PC-3 (cell line): ENCODE measurements at regions of chr17 and their contacts with region 1.

Region 1: GRCh38 chr17:50949989-50950881 is 84.1 kb upstream of the TOB1 start:
- DNase-seq: peak; percentile 96
- ATAC-seq: peak; percentile 82
- H3K4me3 ChIP-seq: peak overlapping the region; percentile 28; the same call in 1 of the 2 replicates
- H3K27ac ChIP-seq: peak overlapping the region; percentile 78
- H3K4me1 ChIP-seq: peaks cover 38% of the 10 kb centered on the region
- H3K27me3 ChIP-seq: no peaks in the 10 kb centered on the region
- CTCF ChIP-seq: peak; percentile 99

Region 2: GRCh38 chr17:50783193-50783660 is 167.0 kb before region 1 on chr17:
- CTCF ChIA-PET with region 1: interaction called, 14 read pairs
- POLR2A ChIA-PET with region 1: no interaction called
- intact Hi-C with region 1: loop called (anchors 1 kb)
- DNase-seq: peak; percentile 97
- ATAC-seq: peak; percentile 99
- H3K4me3 ChIP-seq: peak overlapping the region; percentile 27; the same call in 1 of the 2 replicates
- H3K27ac ChIP-seq: no peak overlapping the region
- H3K4me1 ChIP-seq: no peaks in the 10 kb centered on the region
- H3K27me3 ChIP-seq: no peaks in the 10 kb centered on the region
- CTCF ChIP-seq: peak; percentile 99

Region 3: DNA sequence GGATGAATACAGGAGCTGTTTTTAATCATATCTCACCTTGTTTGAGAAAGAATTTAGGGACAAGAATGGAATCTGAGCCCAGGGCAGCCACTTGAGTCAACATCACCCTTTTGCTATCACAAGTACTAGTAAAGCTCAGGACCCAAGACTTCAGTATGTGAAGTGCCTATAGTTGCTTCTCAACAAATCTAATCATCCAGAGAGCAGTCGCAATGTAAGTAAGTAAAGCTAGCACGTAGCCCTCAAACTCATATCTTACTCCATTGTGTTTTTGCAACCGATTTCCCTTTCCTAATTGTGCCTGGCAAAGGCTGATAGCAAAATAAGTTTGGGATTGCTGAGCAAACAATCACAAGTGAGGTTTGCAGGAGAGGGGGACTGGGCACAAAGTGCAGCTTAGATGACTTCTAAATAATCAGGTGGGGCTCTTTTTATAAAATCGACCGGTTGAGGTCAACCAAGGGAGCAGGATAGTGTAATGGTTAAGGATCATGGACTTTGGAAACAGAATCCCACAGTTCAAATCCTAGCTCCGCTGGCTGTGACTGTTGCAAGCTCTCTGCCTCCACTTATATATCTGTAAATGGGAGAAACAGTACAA is 97.1 kb before region 1 on chr17:
- CTCF ChIA-PET with region 1: interaction called, 11 read pairs
- POLR2A ChIA-PET with region 1: interaction called, 9 read pairs
- intact Hi-C with region 1: loop called (anchors 1 kb)
- DNase-seq: no peak
- ATAC-seq: no peak
- H3K4me3 ChIP-seq: no peak overlapping the region
- H3K27ac ChIP-seq: no peak overlapping the region
- H3K4me1 ChIP-seq: peaks cover 12% of the 10 kb centered on the region
- H3K27me3 ChIP-seq: no peaks in the 10 kb centered on the region
- CTCF ChIP-seq: no peak

Region 4: DNA sequence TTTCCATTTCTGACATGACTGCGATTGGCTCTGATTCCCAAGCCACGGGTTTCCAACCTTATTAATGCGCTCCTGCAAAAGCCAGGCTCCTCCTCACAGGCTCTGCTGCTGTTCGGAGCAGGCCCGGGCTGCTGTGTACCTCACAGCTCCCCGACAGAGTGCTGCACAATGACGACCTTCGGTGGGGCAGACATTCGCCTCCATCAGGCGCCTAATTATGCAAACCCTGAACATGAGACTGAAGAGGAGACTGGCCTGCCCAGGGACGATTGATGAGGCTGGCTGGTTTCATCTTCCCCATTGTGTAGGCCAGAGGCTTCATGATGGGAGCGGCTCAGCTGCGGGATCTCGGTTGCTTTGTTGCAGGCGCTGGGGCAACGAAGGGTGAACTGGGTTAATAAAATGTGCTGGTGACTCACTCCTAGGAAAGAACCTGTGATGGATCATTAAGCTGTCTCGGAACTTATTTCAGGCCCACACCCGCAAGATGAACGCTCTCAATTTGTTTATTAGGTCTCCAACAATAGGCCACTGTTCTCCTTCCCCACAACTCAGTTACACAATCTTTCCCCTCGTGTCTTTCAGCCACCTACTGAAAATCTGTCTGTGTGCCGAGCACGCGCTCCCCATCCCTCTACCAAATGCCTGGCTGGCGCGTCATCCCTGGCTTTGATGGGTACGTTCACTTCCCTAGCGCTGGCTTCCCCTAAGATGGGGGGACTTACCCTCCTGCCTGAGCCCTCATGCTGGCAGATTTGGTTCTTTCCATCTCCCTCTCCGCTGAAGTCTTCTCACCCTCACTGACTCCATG is 56.8 kb before region 1 on chr17:
- CTCF ChIA-PET with region 1: no interaction called
- POLR2A ChIA-PET with region 1: interaction called, 3 read pairs
- intact Hi-C with region 1: loop called (anchors 2 kb)
- DNase-seq: peak; percentile 86
- ATAC-seq: peak; percentile 44
- H3K4me3 ChIP-seq: peak overlapping the region; percentile 1; the same call in 1 of the 2 replicates
- H3K27ac ChIP-seq: peak overlapping the region; percentile 77
- H3K4me1 ChIP-seq: peaks cover 44% of the 10 kb centered on the region
- H3K27me3 ChIP-seq: no peaks in the 10 kb centered on the region
- CTCF ChIP-seq: no peak

Region 5: GRCh38 chr17:50993544-50993943 is 43.3 kb after region 1 on chr17:
- CTCF ChIA-PET with region 1: no interaction called
- POLR2A ChIA-PET with region 1: no interaction called
- intact Hi-C with region 1: no loop called
- DNase-seq: peak; percentile 66
- ATAC-seq: peak; percentile 79
- H3K4me3 ChIP-seq: no peak overlapping the region
- H3K27ac ChIP-seq: no peak overlapping the region
- H3K4me1 ChIP-seq: no peaks in the 10 kb centered on the region
- H3K27me3 ChIP-seq: no peaks in the 10 kb centered on the region
- CTCF ChIP-seq: no peak